Activated CD8-positive, alpha-beta T cell treated with anti-CD3 and anti-CD28 coated beads, Interleukin-2, amount 10 ng/mL, durations not matched to agents 7 days and 5 days (primary cell): ENCODE measurements at regions of chr10 and their contacts with region 1.

Region 1: GRCh38 chr10:97701438-97702069 is 12.0 kb upstream of the MARVELD1 start:
- DNase-seq: peak; percentile 70
- ATAC-seq: peak; percentile 91
- H3K4me3 Mint-ChIP-seq: no peak overlapping the region
- H3K27ac Mint-ChIP-seq: no peak overlapping the region
- H3K4me1 Mint-ChIP-seq: no peaks in the 10 kb centered on the region
- H3K27me3 Mint-ChIP-seq: peaks cover 18% of the 10 kb centered on the region

Region 2: DNA sequence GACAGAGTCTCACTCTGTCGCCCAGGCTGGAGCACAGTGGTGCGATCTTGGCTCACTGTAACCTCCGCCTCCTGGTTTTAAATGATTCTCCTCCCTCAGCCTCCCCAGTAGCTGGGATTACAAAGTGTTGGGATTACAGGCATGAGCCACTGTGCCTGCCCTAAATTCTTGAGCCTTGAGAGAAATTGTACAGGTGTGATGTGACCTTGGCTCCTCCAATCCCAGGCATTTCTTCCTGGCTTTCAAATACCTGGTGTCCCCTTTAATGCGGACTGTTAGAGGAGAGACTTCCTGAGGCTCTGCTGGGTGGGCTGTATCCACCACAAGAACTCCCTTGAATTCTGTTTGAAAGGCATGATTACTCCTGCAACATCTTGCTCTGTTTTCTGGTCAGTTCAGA is 83.3 kb before region 1 on chr10:
- CTCF ChIA-PET with region 1: no interaction called
- POLR2A ChIA-PET with region 1: no interaction called
- DNase-seq: no peak
- ATAC-seq: no peak
- H3K4me3 Mint-ChIP-seq: no peak overlapping the region
- H3K27ac Mint-ChIP-seq: no peak overlapping the region
- H3K4me1 Mint-ChIP-seq: no peaks in the 10 kb centered on the region
- H3K27me3 Mint-ChIP-seq: no peaks in the 10 kb centered on the region

Region 3: GRCh38 chr10:97676770-97677581 is 24.6 kb before region 1 on chr10:
- CTCF ChIA-PET with region 1: interaction called, 43 read pairs
- POLR2A ChIA-PET with region 1: no interaction called
- DNase-seq: peak; percentile 58
- ATAC-seq: peak; percentile 82
- H3K4me3 Mint-ChIP-seq: no peak overlapping the region
- H3K27ac Mint-ChIP-seq: no peak overlapping the region
- H3K4me1 Mint-ChIP-seq: peaks cover 23% of the 10 kb centered on the region
- H3K27me3 Mint-ChIP-seq: no peaks in the 10 kb centered on the region

Region 4: GRCh38 chr10:97714048-97714371 is 12.5 kb after region 1 on chr10:
- CTCF ChIA-PET with region 1: interaction called, 25 read pairs
- POLR2A ChIA-PET with region 1: no interaction called
- DNase-seq: peak; percentile 64
- ATAC-seq: peak; percentile 86
- H3K4me3 Mint-ChIP-seq: peak overlapping the region; percentile 98
- H3K27ac Mint-ChIP-seq: peak overlapping the region; percentile 86
- H3K4me1 Mint-ChIP-seq: peaks cover 20% of the 10 kb centered on the region
- H3K27me3 Mint-ChIP-seq: peaks cover 28% of the 10 kb centered on the region

Region 5: GRCh38 chr10:97731346-97732051 is 29.9 kb after region 1 on chr10:
- CTCF ChIA-PET with region 1: interaction called, 75 read pairs
- POLR2A ChIA-PET with region 1: no interaction called
- DNase-seq: peak; percentile 61
- ATAC-seq: no peak
- H3K4me3 Mint-ChIP-seq: no peak overlapping the region
- H3K27ac Mint-ChIP-seq: no peak overlapping the region
- H3K4me1 Mint-ChIP-seq: peaks cover 6% of the 10 kb centered on the region
- H3K27me3 Mint-ChIP-seq: peaks cover 4% of the 10 kb centered on the region

Region 6: DNA sequence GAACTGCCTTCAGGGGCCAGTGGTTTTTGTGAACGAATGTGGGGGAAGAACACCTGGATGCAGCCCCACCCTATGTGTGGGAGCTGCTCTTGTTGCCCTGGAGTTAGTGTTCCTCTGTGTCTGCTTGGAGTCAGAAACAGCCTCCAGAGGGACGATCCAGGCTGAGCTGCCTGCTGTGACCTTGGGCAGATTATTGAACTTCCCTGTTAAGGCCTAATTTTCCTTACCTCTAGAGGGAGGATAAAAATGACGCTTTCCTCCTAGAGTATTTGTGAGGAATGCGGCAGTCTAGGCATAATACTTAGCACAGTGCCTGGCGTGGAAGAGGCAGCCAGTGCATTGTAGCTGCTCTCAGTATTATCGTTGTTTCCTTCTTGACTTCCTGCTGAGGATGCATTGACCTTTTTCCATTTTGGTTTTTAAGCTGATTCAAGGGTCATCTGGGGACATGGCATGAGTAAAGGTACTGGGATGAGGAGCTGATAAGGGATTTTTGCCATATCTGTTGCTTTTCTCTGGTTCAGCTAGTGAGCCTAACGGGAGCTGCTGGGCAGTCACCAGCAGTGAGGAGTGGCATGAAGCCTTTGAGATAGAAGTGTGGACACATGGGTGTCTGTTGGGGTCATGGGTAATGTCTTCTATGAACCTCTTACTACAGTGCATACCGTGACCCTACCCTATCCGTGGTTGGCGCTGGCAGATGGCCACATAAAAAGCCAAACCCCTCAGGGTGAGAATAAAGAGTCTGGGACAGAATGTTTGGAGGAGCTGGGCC is 41.8 kb after region 1 on chr10:
- CTCF ChIA-PET with region 1: interaction called, 14 read pairs
- POLR2A ChIA-PET with region 1: no interaction called
- DNase-seq: no peak
- ATAC-seq: no peak
- H3K4me3 Mint-ChIP-seq: no peak overlapping the region
- H3K27ac Mint-ChIP-seq: peak overlapping the region; percentile 55
- H3K4me1 Mint-ChIP-seq: peaks cover 31% of the 10 kb centered on the region
- H3K27me3 Mint-ChIP-seq: no peaks in the 10 kb centered on the region

Region 7: DNA sequence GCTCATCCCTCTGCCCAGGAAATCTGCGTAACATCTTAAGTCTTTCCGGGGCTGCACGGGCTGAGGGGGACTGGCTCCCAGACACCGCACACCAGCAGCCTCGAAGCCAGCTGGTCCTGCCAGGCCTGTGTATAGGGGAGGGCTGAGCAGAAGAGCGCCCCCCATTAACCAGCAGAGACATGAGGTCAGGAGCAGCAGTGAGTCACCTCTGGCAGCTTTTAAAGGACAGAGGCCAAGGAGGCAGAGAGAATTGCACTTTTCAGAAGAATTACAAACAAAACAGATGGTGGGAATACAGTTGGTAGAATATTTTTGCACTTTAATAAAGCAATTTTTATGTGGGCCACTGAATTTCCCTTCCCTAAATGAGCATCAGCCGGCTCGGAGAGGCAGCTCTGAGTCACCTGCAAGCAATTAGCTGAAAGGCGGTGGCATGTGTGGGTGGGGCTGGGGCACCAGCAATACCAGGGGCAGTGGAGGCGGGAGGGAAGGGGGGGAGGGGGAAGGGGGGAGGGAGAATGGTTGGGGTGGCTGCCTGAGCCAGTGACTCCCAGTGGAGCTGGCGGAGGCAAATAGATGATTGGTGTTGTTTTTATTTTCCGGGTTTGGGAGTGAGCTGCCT is 187.2 kb after region 1 on chr10:
- CTCF ChIA-PET with region 1: no interaction called
- POLR2A ChIA-PET with region 1: no interaction called
- DNase-seq: no peak
- ATAC-seq: no peak
- H3K4me3 Mint-ChIP-seq: no peak overlapping the region
- H3K27ac Mint-ChIP-seq: no peak overlapping the region
- H3K4me1 Mint-ChIP-seq: peaks cover 2% of the 10 kb centered on the region
- H3K27me3 Mint-ChIP-seq: peaks cover 12% of the 10 kb centered on the region

Region 8: GRCh38 chr10:97903128-97904017 is 201.8 kb after region 1 on chr10:
- CTCF ChIA-PET with region 1: no interaction called
- POLR2A ChIA-PET with region 1: no interaction called
- DNase-seq: no peak
- ATAC-seq: no peak
- H3K4me3 Mint-ChIP-seq: no peak overlapping the region
- H3K27ac Mint-ChIP-seq: no peak overlapping the region
- H3K4me1 Mint-ChIP-seq: no peaks in the 10 kb centered on the region
- H3K27me3 Mint-ChIP-seq: peaks cover 7% of the 10 kb centered on the region